Caco-2 (cell line): ENCODE measurements at regions of chr18 and their contacts with region 1.

Region 1: GRCh38 chr18:49178736-49179135 is 228.0 kb upstream of the SMAD7 start:
- DNase-seq: peak; percentile 23 to 38
- H3K4me3 ChIP-seq: no peak overlapping the region
- H3K4me3 Mint-ChIP-seq: no peak overlapping the region
- H3K27ac Mint-ChIP-seq: no peak overlapping the region
- H3K4me1 ChIP-seq: no peaks in the 10 kb centered on the region
- H3K4me1 Mint-ChIP-seq: no peaks in the 10 kb centered on the region
- H3K27me3 ChIP-seq: no peaks in the 10 kb centered on the region
- H3K27me3 Mint-ChIP-seq: no peaks in the 10 kb centered on the region
- CTCF ChIP-seq: peak; percentile 29 to 38

Region 2: GRCh38 chr18:48675352-48675761 is 503.4 kb before region 1 on chr18:
- CTCF ChIA-PET with region 1: no interaction called
- POLR2A ChIA-PET with region 1: no interaction called
- intact Hi-C with region 1: loop called (anchors 1 kb)
- DNase-seq: peak; percentile 57 to 76
- H3K4me3 ChIP-seq: no peak overlapping the region
- H3K4me3 Mint-ChIP-seq: no peak overlapping the region
- H3K27ac Mint-ChIP-seq: no peak overlapping the region
- H3K4me1 ChIP-seq: no peaks in the 10 kb centered on the region
- H3K4me1 Mint-ChIP-seq: no peaks in the 10 kb centered on the region
- H3K27me3 ChIP-seq: no peaks in the 10 kb centered on the region
- H3K27me3 Mint-ChIP-seq: no peaks in the 10 kb centered on the region
- CTCF ChIP-seq: peak; percentile 54 to 61

Region 3: GRCh38 chr18:48934723-48935432 is 243.9 kb before region 1 on chr18:
- CTCF ChIA-PET with region 1: no interaction called
- POLR2A ChIA-PET with region 1: no interaction called
- intact Hi-C with region 1: no loop called
- DNase-seq: no peak
- H3K4me3 ChIP-seq: no peak overlapping the region
- H3K4me3 Mint-ChIP-seq: no peak overlapping the region
- H3K27ac Mint-ChIP-seq: peak overlapping the region; percentile 45
- H3K4me1 ChIP-seq: peaks cover 43% of the 10 kb centered on the region
- H3K4me1 Mint-ChIP-seq: peaks cover 24% of the 10 kb centered on the region
- H3K27me3 ChIP-seq: no peaks in the 10 kb centered on the region
- H3K27me3 Mint-ChIP-seq: no peaks in the 10 kb centered on the region
- CTCF ChIP-seq: no peak

Region 4: DNA sequence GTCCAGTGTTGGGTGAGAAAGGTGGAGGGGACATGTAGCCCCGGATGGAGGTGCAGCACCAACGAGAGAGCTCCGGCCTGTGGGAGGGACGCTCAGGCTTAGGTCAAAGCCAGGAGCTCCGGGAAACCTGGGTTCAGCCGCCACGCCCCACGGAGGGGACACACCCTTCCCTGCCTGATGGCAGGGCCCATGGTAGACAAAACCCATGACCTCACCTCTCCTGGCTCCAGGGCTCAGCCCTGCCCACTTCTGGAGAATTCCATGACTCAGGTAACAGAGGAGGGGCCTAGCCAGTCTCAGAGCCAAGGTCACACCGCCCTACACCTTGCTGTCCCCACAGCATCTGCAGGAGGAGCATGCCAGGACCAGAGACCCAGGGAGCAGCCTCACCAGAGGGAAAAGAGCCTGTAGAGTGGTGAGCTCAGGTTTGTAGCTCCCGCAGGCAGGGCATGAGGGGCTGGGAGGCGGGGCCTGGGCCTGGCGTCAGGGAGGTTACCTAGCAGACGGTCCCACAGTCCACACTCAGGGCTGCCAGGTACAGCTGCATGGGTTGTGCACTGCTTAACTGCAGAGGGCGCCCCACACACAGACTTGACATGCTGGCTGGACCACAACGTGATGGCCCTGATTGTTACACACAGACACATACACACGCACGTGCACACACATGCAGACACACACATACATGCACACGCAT is 157.2 kb before region 1 on chr18:
- CTCF ChIA-PET with region 1: no interaction called
- POLR2A ChIA-PET with region 1: no interaction called
- intact Hi-C with region 1: loop called (anchors 1 kb)
- DNase-seq: peak; percentile 66 to 69
- H3K4me3 ChIP-seq: no peak overlapping the region
- H3K4me3 Mint-ChIP-seq: peak overlapping the region; percentile 53
- H3K27ac Mint-ChIP-seq: peak overlapping the region; percentile 78
- H3K4me1 ChIP-seq: peaks cover 19% of the 10 kb centered on the region; the same call in 1 of the 2 replicates
- H3K4me1 Mint-ChIP-seq: peaks cover 9% of the 10 kb centered on the region
- H3K27me3 ChIP-seq: no peaks in the 10 kb centered on the region
- H3K27me3 Mint-ChIP-seq: no peaks in the 10 kb centered on the region
- CTCF ChIP-seq: peak in 1 of 2 experiments; percentile 38

Region 5: DNA sequence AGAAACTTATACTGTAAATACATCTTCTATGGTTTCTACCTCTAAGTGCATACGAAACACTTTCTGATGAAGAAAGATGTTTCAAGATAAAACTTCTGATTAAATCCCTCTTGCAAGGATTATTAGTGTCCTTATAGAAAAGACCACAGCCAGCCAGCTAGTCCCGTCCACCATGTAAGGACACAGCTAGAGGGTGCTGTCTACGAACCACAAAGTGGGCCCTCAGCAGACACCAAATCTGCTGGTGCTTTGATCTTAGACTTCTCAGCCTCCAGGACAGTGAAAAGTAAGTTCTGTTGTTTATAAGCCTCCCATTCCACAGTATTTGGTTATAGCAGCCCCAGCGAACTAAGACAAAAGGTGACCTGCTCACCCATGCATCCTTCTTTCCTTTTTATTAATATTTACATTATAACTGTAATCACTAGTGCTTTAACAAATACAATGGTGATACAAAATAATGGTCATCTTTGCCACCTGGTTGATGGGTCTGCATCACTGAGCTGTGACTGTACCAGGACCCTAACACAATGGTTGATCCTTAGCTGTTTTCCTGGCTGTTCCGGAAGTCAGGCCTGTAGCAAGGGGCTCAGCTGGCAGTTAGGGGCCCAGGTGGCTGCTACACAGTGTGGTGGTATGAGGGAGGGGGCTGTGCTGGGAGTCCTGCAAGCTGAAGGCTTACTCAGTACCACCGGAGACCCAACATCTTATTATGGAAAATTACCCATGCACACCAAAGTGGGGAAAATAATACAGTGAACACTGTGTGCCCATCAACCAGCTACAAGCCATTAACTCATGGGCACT is 119.5 kb before region 1 on chr18:
- CTCF ChIA-PET with region 1: no interaction called
- POLR2A ChIA-PET with region 1: no interaction called
- intact Hi-C with region 1: loop called (anchors 1 kb)
- DNase-seq: peak in 1 of 2 experiments; percentile 18
- H3K4me3 ChIP-seq: no peak overlapping the region
- H3K4me3 Mint-ChIP-seq: no peak overlapping the region
- H3K27ac Mint-ChIP-seq: no peak overlapping the region
- H3K4me1 ChIP-seq: no peaks in the 10 kb centered on the region
- H3K4me1 Mint-ChIP-seq: no peaks in the 10 kb centered on the region
- H3K27me3 ChIP-seq: no peaks in the 10 kb centered on the region
- H3K27me3 Mint-ChIP-seq: no peaks in the 10 kb centered on the region
- CTCF ChIP-seq: peak in 1 of 2 experiments; percentile 29

Region 6: DNA sequence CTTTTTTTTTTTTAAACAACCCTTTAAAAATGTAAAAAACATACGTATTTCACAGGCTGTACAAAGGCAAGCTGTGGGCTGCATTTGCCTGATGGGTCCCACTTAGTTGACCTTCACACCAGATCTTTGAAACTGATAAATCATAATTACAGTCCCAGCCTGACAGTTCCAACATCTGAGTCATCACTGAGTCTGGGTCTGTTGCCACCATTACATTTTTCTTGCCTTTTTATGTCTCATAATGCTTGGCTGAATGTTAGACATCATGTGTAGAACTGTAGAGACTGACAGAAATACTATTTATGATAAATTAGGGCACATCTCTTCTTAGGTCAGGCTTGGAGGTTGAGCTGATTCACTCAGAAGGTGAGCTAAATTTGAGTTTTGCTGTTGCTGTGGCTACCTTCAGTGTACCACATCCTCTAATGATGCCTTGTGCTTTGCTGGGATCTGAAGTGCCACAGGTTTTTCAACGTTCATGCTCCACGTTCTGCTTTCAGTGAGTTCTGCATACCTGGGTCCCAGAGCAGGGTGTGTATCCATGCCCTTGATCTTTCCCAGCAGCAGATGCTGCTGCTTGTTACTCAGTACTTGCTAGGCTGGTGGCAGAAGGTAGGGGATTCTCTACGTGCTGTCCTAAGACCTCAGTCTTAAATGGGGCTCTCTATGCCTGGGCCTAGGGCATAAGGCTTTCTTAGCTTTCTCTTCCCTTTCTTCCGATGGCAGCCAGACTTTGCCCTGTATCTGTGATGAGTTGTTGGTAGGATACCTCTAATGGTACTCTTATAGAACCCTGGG is 67.3 kb before region 1 on chr18:
- CTCF ChIA-PET with region 1: no interaction called
- POLR2A ChIA-PET with region 1: no interaction called
- intact Hi-C with region 1: loop called (anchors 5 kb)
- DNase-seq: no peak
- H3K4me3 ChIP-seq: no peak overlapping the region
- H3K4me3 Mint-ChIP-seq: no peak overlapping the region
- H3K27ac Mint-ChIP-seq: no peak overlapping the region
- H3K4me1 ChIP-seq: no peaks in the 10 kb centered on the region
- H3K4me1 Mint-ChIP-seq: no peaks in the 10 kb centered on the region
- H3K27me3 ChIP-seq: no peaks in the 10 kb centered on the region
- H3K27me3 Mint-ChIP-seq: no peaks in the 10 kb centered on the region
- CTCF ChIP-seq: no peak

Region 7: DNA sequence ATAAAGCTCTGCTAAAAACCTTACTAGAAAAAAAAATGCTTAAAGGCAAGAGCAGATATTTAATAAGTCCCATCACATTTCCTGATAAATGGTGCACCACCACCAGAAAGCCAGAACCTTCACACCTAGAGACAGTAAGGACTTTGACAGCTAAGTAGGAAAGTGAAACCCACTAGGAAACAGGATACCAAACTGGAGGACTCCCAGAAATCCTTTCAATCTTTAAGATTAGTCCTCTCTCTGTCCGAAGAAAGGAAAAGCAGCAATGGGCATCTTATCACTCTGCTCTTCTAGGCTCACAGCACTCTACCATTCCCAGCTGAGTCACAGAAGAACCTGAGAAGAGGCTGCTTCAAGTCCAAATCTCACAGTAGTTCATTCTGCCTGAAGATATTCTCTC is 278.1 kb after region 1 on chr18:
- CTCF ChIA-PET with region 1: no interaction called
- POLR2A ChIA-PET with region 1: no interaction called
- intact Hi-C with region 1: no loop called
- DNase-seq: no peak
- H3K4me3 ChIP-seq: no peak overlapping the region
- H3K4me3 Mint-ChIP-seq: no peak overlapping the region
- H3K27ac Mint-ChIP-seq: no peak overlapping the region
- H3K4me1 ChIP-seq: no peaks in the 10 kb centered on the region
- H3K4me1 Mint-ChIP-seq: peaks cover 8% of the 10 kb centered on the region
- H3K27me3 ChIP-seq: no peaks in the 10 kb centered on the region
- H3K27me3 Mint-ChIP-seq: no peaks in the 10 kb centered on the region
- CTCF ChIP-seq: no peak